Activated CD4-positive, alpha-beta memory T cell treated with anti-CD3 and anti-CD28 coated beads, Interleukin-2, amount 10 ng/mL, durations not matched to agents 7 days and 5 days (primary cell): ENCODE measurements at regions of chr1 and their contacts with region 1.

Region 1: GRCh38 chr1:206663832-206664652 is 20.7 kb upstream of the MAPKAPK2 start:
- DNase-seq: peak; percentile 69
- H3K4me3 Mint-ChIP-seq: no peak overlapping the region
- H3K27ac Mint-ChIP-seq: no peak overlapping the region
- H3K4me1 Mint-ChIP-seq: peaks cover 29% of the 10 kb centered on the region
- H3K27me3 Mint-ChIP-seq: peaks cover 27% of the 10 kb centered on the region

Region 2: GRCh38 chr1:206479183-206480125 is 184.6 kb before region 1 on chr1:
- CTCF ChIA-PET with region 1: interaction called, 36 read pairs
- POLR2A ChIA-PET with region 1: no interaction called
- DNase-seq: peak; percentile 73
- H3K4me3 Mint-ChIP-seq: no peak overlapping the region
- H3K27ac Mint-ChIP-seq: peak overlapping the region; percentile 56
- H3K4me1 Mint-ChIP-seq: peaks cover 10% of the 10 kb centered on the region
- H3K27me3 Mint-ChIP-seq: no peaks in the 10 kb centered on the region

Region 3: GRCh38 chr1:206496131-206496793 is 167.8 kb before region 1 on chr1:
- CTCF ChIA-PET with region 1: interaction called, 43 read pairs
- POLR2A ChIA-PET with region 1: interaction called, 7 read pairs
- DNase-seq: no peak
- H3K4me3 Mint-ChIP-seq: no peak overlapping the region
- H3K27ac Mint-ChIP-seq: no peak overlapping the region
- H3K4me1 Mint-ChIP-seq: peaks cover 11% of the 10 kb centered on the region
- H3K27me3 Mint-ChIP-seq: no peaks in the 10 kb centered on the region

Region 4: DNA sequence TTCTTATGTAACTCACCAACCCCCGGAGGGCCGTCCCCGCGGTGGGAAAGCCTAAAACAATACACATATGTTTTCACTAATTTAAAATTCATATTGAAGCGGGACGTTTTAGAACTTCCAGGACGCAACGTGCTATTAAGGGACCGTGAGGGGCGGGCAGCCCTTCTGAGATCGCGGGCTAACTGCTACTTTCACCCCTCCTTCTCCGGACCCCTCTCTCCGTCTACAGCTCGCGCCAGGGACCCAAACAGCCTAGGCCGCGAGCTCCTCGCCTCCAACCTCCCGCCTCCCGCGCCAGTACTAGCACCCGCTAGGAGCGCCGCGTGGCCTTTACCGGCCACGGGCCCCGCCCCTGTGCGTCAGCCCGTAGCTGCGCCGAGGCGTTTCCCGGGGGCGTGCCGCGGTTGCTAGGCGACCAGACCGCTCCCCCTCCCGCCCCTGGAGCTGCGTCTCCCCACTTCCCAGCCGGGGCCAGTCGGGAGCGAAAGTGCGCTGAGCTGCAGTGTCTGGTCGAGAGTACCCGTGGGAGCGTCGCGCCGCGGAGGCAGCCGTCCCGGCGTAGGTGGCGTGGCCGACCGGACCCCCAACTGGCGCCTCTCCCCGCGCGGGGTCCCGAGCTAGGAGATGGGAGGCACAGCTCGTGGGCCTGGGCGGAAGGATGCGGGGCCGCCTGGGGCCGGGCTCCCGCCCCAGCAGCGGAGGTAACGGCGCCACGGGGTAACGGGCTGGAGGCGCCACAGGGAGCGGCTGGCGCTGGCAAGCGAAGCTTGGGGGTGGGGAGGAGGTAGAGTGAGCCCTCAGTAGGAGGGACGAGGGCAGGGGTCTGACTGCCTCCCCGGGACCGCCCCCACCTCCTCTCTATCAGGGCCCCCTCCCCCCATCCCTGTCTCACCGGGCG is 28.7 kb before region 1 on chr1 and contains the start of gene DYRK3:
- CTCF ChIA-PET with region 1: interaction called, 250 read pairs
- POLR2A ChIA-PET with region 1: interaction called, 33 read pairs
- DNase-seq: peak; percentile 95
- H3K4me3 Mint-ChIP-seq: peak within 1 kb of the TSS; percentile 80
- H3K27ac Mint-ChIP-seq: peak within 1 kb of the TSS; percentile 80
- H3K4me1 Mint-ChIP-seq: peaks cover 36% of the 10 kb centered on the region
- H3K27me3 Mint-ChIP-seq: peaks cover 23% of the 10 kb centered on the region
- total RNA-seq, gene DYRK3: 8.8 to 9.2 TPM

Region 5: GRCh38 chr1:206674745-206675175 is 10.7 kb after region 1 on chr1:
- CTCF ChIA-PET with region 1: interaction called, 42 read pairs
- POLR2A ChIA-PET with region 1: no interaction called
- DNase-seq: no peak
- H3K4me3 Mint-ChIP-seq: no peak overlapping the region
- H3K27ac Mint-ChIP-seq: no peak overlapping the region
- H3K4me1 Mint-ChIP-seq: peaks cover 14% of the 10 kb centered on the region
- H3K27me3 Mint-ChIP-seq: peaks cover 6% of the 10 kb centered on the region

Region 6: DNA sequence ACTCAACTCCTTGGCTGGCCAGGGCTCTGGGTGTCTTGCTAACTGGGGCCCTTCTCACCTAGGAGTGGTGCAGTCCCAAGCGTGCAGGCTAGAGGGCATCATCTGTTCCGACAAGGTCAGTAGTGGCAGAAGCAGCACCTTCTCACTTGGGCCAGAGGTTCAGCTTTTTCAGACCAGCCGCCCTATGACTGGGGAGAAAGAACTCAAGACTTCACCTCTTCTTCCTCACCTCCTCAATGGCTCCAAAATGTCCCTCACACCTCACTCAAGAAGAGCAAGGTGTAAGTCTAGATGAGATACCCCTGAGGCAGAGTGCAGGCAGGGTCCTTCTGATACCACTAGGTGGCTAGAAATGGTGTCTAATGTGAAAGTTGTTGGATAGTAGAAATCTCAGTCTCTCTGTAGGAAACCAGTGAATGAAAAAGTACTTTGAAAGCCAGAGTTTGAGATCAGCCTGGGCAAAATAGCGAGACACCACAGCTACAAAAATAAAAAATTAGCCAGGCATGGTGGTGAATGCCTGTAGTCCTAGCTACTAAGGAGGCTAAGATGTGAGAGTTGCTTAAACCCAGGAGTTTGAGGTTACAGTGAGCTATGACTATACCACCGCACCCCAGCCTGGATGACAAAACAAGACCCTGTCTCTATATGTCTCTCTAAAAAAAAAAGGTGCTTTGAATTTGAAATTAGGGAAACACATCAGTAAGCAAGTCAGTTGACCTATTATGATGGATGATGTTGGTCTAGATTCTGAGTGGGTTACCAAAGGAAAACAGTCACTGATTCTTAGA is 192.8 kb after region 1 on chr1:
- CTCF ChIA-PET with region 1: no interaction called
- POLR2A ChIA-PET with region 1: no interaction called
- DNase-seq: no peak
- H3K4me3 Mint-ChIP-seq: no peak overlapping the region
- H3K27ac Mint-ChIP-seq: no peak overlapping the region
- H3K4me1 Mint-ChIP-seq: peaks cover 28% of the 10 kb centered on the region
- H3K27me3 Mint-ChIP-seq: peaks cover 36% of the 10 kb centered on the region